Activated B cell treated with CpG ODN at 0.5 μM for 24 hours (primary cell): ENCODE measurements at regions of chr13 and their contacts with region 1.

Region 1: GRCh38 chr13:111216166-111216960 is 101.3 kb downstream of the ARHGEF7 start:
- DNase-seq: no peak
- ATAC-seq: peak; percentile 60
- H3K4me3 Mint-ChIP-seq: no peak overlapping the region
- H3K27ac Mint-ChIP-seq: peak overlapping the region; percentile 59
- H3K4me1 Mint-ChIP-seq: peaks cover 38% of the 10 kb centered on the region
- H3K27me3 Mint-ChIP-seq: no peaks in the 10 kb centered on the region
- CTCF ChIP-seq: no peak

Region 2: DNA sequence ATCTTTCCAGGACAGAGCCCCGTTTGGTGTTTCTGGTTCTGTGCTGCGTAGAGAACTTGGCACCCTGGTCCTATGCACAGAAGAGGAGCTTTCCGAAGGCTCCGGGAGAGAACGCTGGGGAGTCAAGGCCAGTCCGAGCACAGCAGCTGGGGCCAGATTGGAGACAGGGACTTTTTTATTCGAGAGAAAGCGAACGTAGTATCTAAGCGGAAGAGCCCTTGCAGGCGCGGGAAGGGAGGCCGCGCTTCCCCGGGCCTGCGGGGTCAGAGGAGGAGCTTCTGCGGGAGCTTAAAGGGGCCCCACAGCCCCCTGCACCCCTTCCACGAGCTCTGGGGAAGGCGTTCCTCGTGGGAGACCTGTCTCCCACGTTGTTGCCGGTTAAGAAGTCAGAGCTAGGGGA is 149.8 kb before region 1 on chr13:
- CTCF ChIA-PET with region 1: interaction called, 112 read pairs
- POLR2A ChIA-PET with region 1: no interaction called
- intact Hi-C with region 1: loop called (anchors 1 kb)
- DNase-seq: no peak
- ATAC-seq: no peak
- H3K4me3 Mint-ChIP-seq: peak overlapping the region; percentile 67
- H3K27ac Mint-ChIP-seq: no peak overlapping the region
- H3K4me1 Mint-ChIP-seq: peaks cover 10% of the 10 kb centered on the region
- H3K27me3 Mint-ChIP-seq: peaks cover 33% of the 10 kb centered on the region
- CTCF ChIP-seq: no peak

Region 3: DNA sequence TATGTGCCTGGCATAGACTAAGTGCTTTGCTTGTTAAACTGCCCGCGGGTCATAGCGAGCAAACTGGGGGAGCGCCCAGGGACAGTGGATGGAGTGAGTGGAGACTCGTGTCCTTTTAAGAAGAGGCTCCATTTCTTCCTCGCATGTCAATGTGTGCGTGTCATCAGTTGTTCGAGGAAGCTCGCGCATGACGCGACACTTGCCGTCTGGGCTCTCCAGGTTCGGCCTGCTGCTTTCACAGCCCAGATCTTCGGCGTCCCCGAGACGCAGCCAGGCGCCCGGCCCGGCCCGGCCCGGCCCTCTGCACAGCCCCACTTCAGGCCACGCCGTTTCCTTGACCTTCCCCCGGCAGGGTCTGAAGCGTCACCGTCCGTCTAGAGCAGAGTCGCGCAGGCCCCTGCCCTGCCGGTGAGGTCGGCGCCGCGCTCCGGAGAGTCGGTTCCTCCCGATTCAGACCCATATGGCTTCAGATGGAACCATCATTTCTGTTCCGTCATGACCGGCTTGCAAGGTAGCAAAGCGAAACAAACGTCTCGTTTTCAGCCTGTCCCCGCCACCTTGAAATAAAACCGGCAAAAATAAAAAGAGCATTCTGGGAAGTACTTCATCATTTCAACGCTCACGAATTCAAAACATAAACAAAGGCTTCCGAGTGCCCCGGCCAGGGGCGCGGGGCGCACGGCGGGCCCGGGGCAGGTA is 101.9 kb before region 1 on chr13:
- CTCF ChIA-PET with region 1: no interaction called
- POLR2A ChIA-PET with region 1: no interaction called
- intact Hi-C with region 1: loop called (anchors 2 kb)
- DNase-seq: no peak
- ATAC-seq: peak; percentile 34
- H3K4me3 Mint-ChIP-seq: peak overlapping the region; percentile 86
- H3K27ac Mint-ChIP-seq: no peak overlapping the region
- H3K4me1 Mint-ChIP-seq: peaks cover 16% of the 10 kb centered on the region
- H3K27me3 Mint-ChIP-seq: peaks cover 68% of the 10 kb centered on the region
- CTCF ChIP-seq: no peak

Region 4: DNA sequence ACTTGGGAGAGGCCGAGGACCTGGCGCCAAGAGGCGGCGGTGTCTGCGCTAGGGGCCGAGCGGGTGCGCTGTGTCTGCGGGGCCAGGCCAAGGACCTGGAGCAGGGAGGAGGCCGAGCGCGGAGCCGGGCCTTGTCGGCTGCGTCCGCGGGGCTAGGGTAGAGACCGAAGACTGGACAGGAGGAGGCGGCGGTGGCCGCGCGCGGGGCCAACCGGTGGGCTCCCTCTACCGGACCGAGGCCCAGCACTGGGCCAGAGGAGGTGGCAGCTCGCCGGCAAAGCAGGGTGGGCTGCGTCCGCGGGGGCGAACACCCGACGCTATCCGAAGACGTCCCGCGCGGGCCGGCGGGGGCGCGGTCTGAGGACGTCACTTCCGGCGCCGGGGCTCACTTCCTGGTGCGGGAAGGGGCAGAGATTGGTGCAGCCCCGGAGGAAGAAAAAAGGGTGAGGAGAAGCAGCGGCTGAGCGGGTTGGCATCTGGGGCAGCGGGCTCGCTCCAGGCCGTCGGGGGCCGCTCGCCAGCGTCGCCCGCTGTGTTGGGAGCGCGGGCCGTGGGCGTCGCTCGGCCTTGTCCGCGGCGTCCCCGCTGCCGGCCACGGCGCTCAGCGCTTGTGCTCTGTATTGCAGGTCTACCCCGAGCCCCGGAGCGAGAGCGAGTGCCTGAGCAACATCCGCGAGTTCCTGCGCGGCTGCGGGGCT is 62.9 kb before region 1 on chr13:
- CTCF ChIA-PET with region 1: interaction called, 3 read pairs
- POLR2A ChIA-PET with region 1: interaction called, 4 read pairs
- intact Hi-C with region 1: loop called (anchors 1 kb)
- DNase-seq: peak; percentile 98
- ATAC-seq: peak; percentile 85
- H3K4me3 Mint-ChIP-seq: peak overlapping the region; percentile 92
- H3K27ac Mint-ChIP-seq: peak overlapping the region; percentile 88
- H3K4me1 Mint-ChIP-seq: peaks cover 30% of the 10 kb centered on the region
- H3K27me3 Mint-ChIP-seq: no peaks in the 10 kb centered on the region
- CTCF ChIP-seq: no peak

Region 5: DNA sequence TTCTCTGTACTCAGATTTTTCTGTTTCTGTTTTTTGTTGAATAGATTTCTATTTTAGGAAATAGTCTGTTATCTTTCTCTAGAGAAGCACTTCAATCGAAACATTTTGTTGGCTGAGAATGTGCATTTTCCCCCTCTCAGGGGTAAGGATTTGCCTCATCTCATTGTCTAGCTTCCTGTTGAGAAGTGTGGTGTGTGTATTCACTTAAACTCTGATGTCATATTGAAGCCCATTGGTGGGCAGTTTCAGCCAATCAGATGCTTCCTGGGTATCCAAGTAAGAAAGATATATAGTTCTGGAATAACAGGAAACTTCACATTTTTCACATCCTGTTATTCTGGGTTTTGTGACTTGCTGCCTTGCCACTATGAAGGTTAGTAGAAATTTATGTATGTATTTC is 13.6 kb before region 1 on chr13:
- CTCF ChIA-PET with region 1: interaction called, 4 read pairs
- POLR2A ChIA-PET with region 1: interaction called, 4 read pairs
- intact Hi-C with region 1: loop called (anchors 2 kb)
- DNase-seq: no peak
- ATAC-seq: peak; percentile 49
- H3K4me3 Mint-ChIP-seq: peak overlapping the region; percentile 28
- H3K27ac Mint-ChIP-seq: peak overlapping the region; percentile 74
- H3K4me1 Mint-ChIP-seq: peaks cover 87% of the 10 kb centered on the region
- H3K27me3 Mint-ChIP-seq: no peaks in the 10 kb centered on the region
- CTCF ChIP-seq: no peak

Region 6: GRCh38 chr13:111315347-111315995 is 99.1 kb after region 1 on chr13:
- CTCF ChIA-PET with region 1: no interaction called
- POLR2A ChIA-PET with region 1: no interaction called
- intact Hi-C with region 1: no loop called
- DNase-seq: no peak
- ATAC-seq: no peak
- H3K4me3 Mint-ChIP-seq: no peak overlapping the region
- H3K27ac Mint-ChIP-seq: no peak overlapping the region
- H3K4me1 Mint-ChIP-seq: no peaks in the 10 kb centered on the region
- H3K27me3 Mint-ChIP-seq: no peaks in the 10 kb centered on the region
- CTCF ChIP-seq: no peak